Heart right ventricle (tissue), 16 donors: ENCODE measurements at regions of chr3 and their contacts with region 1.

Region 1: DNA sequence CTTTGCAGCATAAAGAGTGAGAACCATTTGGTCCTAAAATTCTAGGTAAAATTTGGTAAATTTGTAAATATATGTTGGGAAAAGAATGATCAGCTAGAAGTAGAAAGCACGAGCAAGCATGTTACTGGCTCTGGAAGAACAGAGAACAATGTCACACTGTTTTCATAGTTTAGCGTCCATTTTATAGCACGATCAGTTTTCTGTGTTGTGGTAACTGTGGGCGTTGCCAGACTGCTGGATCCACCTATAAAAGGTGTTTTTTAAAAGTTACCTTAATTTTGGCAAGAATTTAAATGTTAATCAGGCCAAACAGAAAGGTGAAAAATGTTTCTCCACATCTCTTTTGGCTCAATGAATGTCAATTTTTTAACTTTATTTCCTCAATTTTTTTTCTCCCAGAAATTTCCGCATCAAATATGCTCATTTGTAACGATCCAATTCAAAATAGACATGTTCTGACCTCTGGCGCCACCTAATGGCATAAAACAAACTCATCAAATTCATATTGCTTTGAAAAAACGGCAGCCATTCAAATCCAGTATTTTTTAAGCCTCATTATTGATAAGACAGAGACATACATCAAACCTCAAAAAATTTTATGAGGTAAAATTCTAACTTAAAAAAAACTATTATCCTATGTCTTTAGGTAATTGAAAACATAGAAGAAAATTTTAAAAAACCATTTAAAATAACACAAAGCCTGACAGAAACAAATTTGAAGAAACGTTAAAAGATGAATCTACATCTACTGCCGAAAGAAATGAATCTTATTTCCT is 5.5 kb upstream of the GP5 start:
- DNase-seq: peak in 1 of 2 donors; percentile 48
- ATAC-seq: no peak
- H3K4me3 ChIP-seq: no peak overlapping the region
- H3K27ac ChIP-seq: no peak overlapping the region
- H3K4me1 ChIP-seq: no peaks in the 10 kb centered on the region
- H3K27me3 ChIP-seq: peaks cover 0 to 7% (median 0%) of the 10 kb centered on the region in 7 donors
- CTCF ChIP-seq: peak; percentile 52 to 81 (median 74)

Region 2: GRCh38 chr3:193665370-193665989 is 739.1 kb before region 1 on chr3:
- intact Hi-C with region 1: loop called in 1 of 10 experiments (anchors 10 kb)
- DNase-seq: no peak
- ATAC-seq: no peak
- H3K4me3 ChIP-seq: no peak overlapping the region
- H3K27ac ChIP-seq: no peak overlapping the region
- H3K4me1 ChIP-seq: no peaks in the 10 kb centered on the region
- H3K27me3 ChIP-seq: no peaks in the 10 kb centered on the region
- CTCF ChIP-seq: peak; percentile 34 to 68 (median 54)

Region 3: GRCh38 chr3:193780810-193781472 is 623.6 kb before region 1 on chr3:
- intact Hi-C with region 1: loop called in 2 of 10 experiments (anchors 5 to 10 kb)
- DNase-seq: peak; percentile 72 to 75
- ATAC-seq: peak; percentile 85 to 95 (median 92)
- H3K4me3 ChIP-seq: no peak overlapping the region
- H3K27ac ChIP-seq: no peak overlapping the region
- H3K4me1 ChIP-seq: peaks cover 3 to 22% (median 8%) of the 10 kb centered on the region in 9 donors
- H3K27me3 ChIP-seq: peaks cover 4 to 81% (median 59%) of the 10 kb centered on the region in 7 donors
- CTCF ChIP-seq: peak; percentile 70 to 93 (median 80)

Region 4: GRCh38 chr3:193788189-193788991 is 616.2 kb before region 1 on chr3:
- intact Hi-C with region 1: loop called in 1 of 10 experiments (anchors 10 kb)
- DNase-seq: peak; percentile 51 to 76
- ATAC-seq: peak; percentile 87 to 97 (median 95)
- H3K4me3 ChIP-seq: no peak overlapping the region
- H3K27ac ChIP-seq: peak overlapping the region in 4 of 10 donors; percentile 6 to 39 (median 16)
- H3K4me1 ChIP-seq: peaks cover 7 to 22% (median 12%) of the 10 kb centered on the region in 9 donors
- H3K27me3 ChIP-seq: peaks cover 3 to 61% (median 50%) of the 10 kb centered on the region in 7 donors
- CTCF ChIP-seq: peak; percentile 63 to 94 (median 84)